ENCODE measurements at regions of chr11 and their contacts with region 1.

Region 1: DNA sequence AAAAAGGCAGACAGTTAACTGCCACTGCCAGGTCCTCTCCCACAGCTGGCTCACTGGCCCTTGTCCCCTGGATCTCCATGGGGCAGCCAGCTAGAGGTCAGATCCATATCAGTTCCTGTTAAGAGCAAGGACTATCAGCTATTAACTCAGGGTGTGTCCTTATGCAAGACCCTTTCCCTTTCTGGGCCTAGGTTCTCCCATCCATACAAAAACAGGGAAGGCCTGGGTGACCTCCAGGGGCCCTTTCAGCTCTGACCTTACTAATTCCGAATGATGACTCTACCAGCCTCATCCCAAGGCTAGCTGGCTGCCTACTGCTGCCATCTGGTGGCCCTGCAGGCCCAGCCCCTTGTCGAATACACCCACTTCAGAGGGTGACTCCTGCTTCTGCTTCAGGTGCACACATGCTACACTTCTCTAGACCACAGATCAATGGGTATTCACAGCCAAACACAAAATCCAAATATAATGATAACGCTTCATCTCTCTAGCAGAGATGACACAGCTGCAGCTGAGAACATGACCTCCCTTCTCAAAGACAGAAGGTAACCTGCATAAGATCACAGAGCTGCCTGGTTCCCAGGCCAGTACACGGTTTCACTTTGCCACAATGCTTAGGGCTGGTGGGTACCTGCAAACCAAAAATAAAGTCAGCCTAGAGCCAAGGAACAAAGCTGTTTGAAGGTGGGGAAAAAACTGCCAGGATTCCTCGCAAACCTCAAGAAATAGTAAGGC is 34.1 kb downstream of the SERGEF start:
- DNase-seq: peak; percentile 57
- H3K4me3 Mint-ChIP-seq: no peak overlapping the region
- H3K27ac Mint-ChIP-seq: no peak overlapping the region
- H3K4me1 Mint-ChIP-seq: no peaks in the 10 kb centered on the region
- H3K27me3 Mint-ChIP-seq: no peaks in the 10 kb centered on the region
- CTCF ChIP-seq: peak; percentile 75

Region 2: DNA sequence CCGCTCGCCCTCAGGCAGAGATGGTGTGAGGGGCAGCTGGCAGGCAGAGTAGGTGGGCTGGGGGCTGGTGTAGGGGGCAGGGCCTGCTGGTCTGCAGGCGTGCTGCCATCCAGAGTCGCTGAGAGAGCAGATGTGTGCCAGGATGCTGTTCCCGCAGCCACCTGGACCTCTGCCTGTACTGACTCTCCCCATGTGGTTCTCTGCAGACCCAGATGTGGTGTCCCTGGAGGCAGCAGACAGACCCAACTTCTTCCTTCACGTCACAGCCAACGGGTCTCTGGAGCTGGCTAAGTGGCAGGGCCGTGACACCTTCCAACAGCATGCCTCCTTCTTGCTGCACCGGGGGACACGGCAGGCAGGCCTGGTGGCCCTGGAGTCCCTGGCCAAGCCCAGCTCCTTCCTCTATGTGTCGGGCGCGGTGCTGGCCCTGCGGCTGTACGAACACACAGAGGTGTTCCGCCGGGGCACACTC is 373.0 kb before region 1 on chr11:
- CTCF ChIA-PET with region 1: interaction called, 47 read pairs
- POLR2A ChIA-PET with region 1: no interaction called
- intact Hi-C with region 1: no loop called
- DNase-seq: no peak
- H3K4me3 Mint-ChIP-seq: no peak overlapping the region
- H3K27ac Mint-ChIP-seq: no peak overlapping the region
- H3K4me1 Mint-ChIP-seq: no peaks in the 10 kb centered on the region
- H3K27me3 Mint-ChIP-seq: peaks cover 14% of the 10 kb centered on the region
- CTCF ChIP-seq: no peak

Region 3: GRCh38 chr11:17766590-17766989 is 212.1 kb before region 1 on chr11:
- CTCF ChIA-PET with region 1: interaction called, 28 read pairs
- POLR2A ChIA-PET with region 1: interaction called, 3 read pairs
- intact Hi-C with region 1: loop called (anchors 1 kb)
- DNase-seq: peak; percentile 26
- H3K4me3 Mint-ChIP-seq: no peak overlapping the region
- H3K27ac Mint-ChIP-seq: no peak overlapping the region
- H3K4me1 Mint-ChIP-seq: no peaks in the 10 kb centered on the region
- H3K27me3 Mint-ChIP-seq: no peaks in the 10 kb centered on the region
- CTCF ChIP-seq: no peak

Region 4: DNA sequence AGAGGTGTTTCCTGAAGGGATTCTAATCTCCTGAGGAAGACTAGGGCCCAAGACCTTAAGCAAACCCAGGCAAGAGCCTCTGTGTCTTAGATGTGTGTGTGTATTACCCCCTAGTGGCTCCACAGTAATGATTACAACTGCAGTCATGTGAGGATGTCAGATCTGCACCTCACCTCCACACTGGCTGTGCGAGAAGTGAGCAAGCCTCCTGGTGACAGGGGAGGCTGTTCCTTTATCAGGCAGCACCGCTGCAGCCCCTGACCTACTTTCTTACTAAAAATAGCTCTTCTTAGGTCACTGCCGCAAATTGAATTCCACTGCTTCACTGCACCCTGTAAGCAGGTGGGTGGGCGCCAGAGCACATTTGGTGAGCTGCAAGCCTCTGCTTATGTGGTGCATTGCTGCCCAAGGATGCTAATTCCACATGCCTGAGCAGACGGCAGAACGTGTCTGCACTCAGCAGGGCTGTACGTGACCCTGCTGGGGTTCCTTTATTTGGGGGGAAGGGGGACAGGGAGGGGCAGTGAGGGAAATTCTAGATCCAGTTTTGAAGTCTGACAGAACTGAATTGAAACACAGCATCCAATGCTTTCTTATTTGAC is 131.8 kb before region 1 on chr11:
- CTCF ChIA-PET with region 1: interaction called, 3 read pairs
- POLR2A ChIA-PET with region 1: no interaction called
- intact Hi-C with region 1: loop called (anchors 5 kb)
- DNase-seq: peak; percentile 58
- H3K4me3 Mint-ChIP-seq: no peak overlapping the region
- H3K27ac Mint-ChIP-seq: no peak overlapping the region
- H3K4me1 Mint-ChIP-seq: peaks cover 13% of the 10 kb centered on the region
- H3K27me3 Mint-ChIP-seq: no peaks in the 10 kb centered on the region
- CTCF ChIP-seq: no peak

Region 5: GRCh38 chr11:17960091-17960490 is 18.6 kb before region 1 on chr11:
- CTCF ChIA-PET with region 1: interaction called, 21 read pairs
- POLR2A ChIA-PET with region 1: no interaction called
- intact Hi-C with region 1: no loop called
- DNase-seq: no peak
- H3K4me3 Mint-ChIP-seq: no peak overlapping the region
- H3K27ac Mint-ChIP-seq: no peak overlapping the region
- H3K4me1 Mint-ChIP-seq: no peaks in the 10 kb centered on the region
- H3K27me3 Mint-ChIP-seq: no peaks in the 10 kb centered on the region
- CTCF ChIP-seq: no peak

Measured in MCF 10A (cell line).